ENCODE measurements at regions of chr22 and their contacts with region 1.

Region 1: DNA sequence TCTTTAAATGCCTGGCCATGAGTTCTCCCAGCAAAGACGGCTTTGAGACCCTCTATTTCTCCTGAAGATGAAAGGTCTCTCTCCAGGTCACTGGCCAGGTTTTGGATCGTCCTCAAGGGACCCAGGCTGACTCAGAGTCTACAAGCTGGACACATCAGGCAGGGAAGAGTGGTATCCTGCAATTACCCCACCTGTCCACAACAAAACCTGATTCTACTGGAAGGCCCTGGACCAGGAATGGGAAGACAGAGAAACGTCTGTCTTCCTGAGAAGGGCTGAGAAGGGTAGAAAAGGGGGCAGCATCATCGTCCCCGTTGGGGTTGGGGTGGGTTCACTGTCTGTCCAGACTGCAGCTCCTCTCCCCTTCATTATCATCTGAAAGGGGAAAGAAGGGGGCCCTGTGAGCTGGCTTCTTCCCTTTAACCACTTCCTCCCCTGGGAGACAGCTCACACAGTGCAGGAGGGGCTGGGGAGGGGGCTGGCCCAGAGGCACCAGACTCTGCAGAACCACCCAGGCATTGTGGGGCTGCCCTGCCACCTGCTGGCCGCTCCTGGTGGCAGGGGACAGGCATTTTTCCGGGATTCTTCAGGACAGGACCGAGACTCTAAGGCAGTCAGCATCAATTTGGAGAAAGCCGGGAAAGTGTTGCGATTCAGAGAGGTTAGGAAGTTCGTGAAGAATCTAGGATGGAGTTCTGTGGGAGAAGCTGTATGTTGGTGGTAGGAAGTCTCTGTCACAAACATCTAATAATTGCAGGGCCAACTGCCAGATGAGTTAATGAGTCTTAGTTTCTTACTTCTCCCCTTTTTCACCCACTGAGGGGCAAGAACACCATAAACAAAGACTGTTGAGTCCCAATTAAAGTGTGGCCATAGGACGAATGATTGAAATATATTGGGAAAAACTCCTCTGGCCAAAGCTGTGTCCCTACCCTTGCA is 57.6 kb downstream of the SYN3 start:
- DNase-seq: peak; percentile 77
- ATAC-seq: peak; percentile 79

Region 2: DNA sequence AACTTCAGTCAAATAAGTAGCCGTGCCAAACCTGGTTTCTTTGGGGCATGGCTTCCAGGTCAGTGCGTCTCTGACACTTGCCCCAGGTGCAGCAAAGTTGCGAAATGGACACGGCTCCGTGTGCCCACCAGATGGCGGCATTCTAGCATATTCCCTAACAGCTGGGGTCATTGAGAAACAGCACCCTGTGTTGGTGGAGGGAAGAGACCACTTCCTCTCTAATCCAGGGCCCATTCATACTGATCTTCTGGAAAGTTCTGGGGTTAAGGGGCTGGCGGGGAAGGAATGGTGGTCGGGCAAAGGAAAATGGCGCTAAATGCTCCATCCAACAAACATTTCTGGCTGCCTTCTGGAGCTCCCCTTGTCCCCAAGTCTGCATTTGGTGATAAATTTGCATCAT is 340.3 kb before region 1 on chr22:
- intact Hi-C with region 1: loop called (anchors 5 kb)
- DNase-seq: peak; percentile 82
- ATAC-seq: peak; percentile 77

Region 3: DNA sequence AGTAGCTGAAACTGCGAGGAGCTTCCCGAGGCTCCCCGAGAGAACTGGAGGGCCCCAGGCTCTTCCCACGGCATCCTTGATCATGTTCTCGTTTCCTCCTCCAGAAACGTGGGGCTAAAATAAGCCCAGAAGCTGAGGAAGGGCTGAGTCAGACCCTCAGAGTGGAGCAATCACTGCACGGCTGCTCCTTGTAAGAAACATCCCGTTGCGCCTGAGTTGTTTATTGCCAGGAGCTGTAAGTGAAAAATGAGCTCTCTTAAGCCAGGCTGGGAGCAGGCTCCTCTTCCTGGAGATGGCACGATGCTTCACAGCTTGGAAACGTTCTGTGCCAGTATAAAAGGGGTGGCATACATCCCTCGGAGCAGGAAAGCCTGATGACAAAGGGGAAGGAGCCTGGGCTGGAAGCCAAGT is 104.9 kb after region 1 on chr22:
- intact Hi-C with region 1: no loop called
- DNase-seq: no peak
- ATAC-seq: no peak

Measured in Right ventricle myocardium superior (tissue), 1 donor.